Activated T-helper 2 cell treated with anti-CD3 and anti-CD28 coated beads, Interferon-gamma antibody, Interleukin-2, Interleukin-4, amounts not matched to agents 10 μg/mL and 5 μg/mL and 100 μg/mL, durations not matched to agents 14 hours and 24 hours and 36 hours (primary cell): ENCODE measurements at regions of chr7 and their contacts with region 1.

Region 1: GRCh38 chr7:138865843-138866242 is 67.8 kb upstream of the ATP6V0A4 start:
- DNase-seq: peak; percentile 46
- H3K4me3 Mint-ChIP-seq: no peak overlapping the region
- H3K27ac Mint-ChIP-seq: no peak overlapping the region
- H3K4me1 Mint-ChIP-seq: peaks cover 8% of the 10 kb centered on the region
- H3K27me3 Mint-ChIP-seq: no peaks in the 10 kb centered on the region

Region 2: GRCh38 chr7:138161600-138162081 is 704.2 kb before region 1 on chr7:
- intact Hi-C with region 1: loop called (anchors 1 kb)
- DNase-seq: peak; percentile 67
- H3K4me3 Mint-ChIP-seq: no peak overlapping the region
- H3K27ac Mint-ChIP-seq: no peak overlapping the region
- H3K4me1 Mint-ChIP-seq: no peaks in the 10 kb centered on the region
- H3K27me3 Mint-ChIP-seq: no peaks in the 10 kb centered on the region

Region 3: GRCh38 chr7:139669106-139670061 is 803.5 kb after region 1 on chr7:
- intact Hi-C with region 1: no loop called
- DNase-seq: no peak
- H3K4me3 Mint-ChIP-seq: peak overlapping the region; percentile 51
- H3K27ac Mint-ChIP-seq: peak overlapping the region; percentile 82
- H3K4me1 Mint-ChIP-seq: peaks cover 26% of the 10 kb centered on the region
- H3K27me3 Mint-ChIP-seq: no peaks in the 10 kb centered on the region

Region 4: GRCh38 chr7:139855498-139856270 is 989.8 kb after region 1 on chr7:
- intact Hi-C with region 1: no loop called
- DNase-seq: no peak
- H3K4me3 Mint-ChIP-seq: no peak overlapping the region
- H3K27ac Mint-ChIP-seq: peak overlapping the region; percentile 58
- H3K4me1 Mint-ChIP-seq: peaks cover 6% of the 10 kb centered on the region
- H3K27me3 Mint-ChIP-seq: no peaks in the 10 kb centered on the region